ENCODE measurements at regions of chr4 and their contacts with region 1.

Region 1: DNA sequence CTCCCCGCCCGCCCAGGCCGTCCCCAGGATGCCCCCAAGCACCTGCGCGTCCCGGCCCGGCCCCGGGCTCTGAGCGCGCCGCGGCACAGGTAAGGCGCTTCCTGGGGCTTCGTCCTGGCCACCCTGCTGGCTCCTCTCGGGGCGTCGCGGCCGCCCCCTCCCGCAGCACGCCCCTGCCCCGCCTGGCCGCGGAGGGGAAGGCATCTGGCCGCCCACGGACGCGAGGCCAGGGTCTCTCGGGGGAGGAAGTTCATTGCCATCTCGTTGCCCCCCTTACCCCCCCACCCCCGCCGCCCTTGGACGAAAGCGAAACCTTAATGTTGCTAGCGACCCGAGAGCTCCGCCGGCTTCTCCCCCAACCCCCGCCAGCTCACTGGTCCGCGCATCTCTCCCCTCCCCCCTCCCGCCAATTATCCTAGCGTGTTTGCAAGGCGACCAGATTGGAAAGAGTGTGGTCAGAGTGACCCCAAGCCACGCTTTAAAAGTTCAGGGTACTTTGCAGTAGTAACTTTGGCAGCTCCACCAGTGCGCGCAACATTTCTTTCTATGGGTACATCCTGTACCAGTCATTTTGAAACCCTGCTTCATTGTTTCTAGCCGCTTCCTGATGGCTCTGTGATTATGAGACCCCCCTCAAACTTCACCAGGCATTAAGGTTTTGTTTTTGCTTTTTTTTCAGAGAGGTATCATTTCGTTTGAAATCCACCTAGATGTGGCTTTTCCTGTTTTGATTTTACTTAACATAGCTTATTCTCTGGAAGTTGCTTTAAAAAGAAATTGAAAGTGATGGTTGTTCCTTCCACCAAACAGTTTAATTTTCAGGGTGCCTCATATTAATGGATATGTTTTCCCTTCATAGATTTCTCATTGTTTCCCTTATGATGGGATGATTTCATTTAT is 626 bp downstream of the TBC1D1 start:
- DNase-seq: peak; percentile 74
- H3K4me3 Mint-ChIP-seq: peak overlapping the region; percentile 89
- H3K27ac Mint-ChIP-seq: peak overlapping the region; percentile 86
- H3K4me1 Mint-ChIP-seq: peaks cover 37% of the 10 kb centered on the region
- H3K27me3 Mint-ChIP-seq: peaks cover 8% of the 10 kb centered on the region

Region 2: GRCh38 chr4:36325499-36325898 is 1566.0 kb before region 1 on chr4:
- CTCF ChIA-PET with region 1: no interaction called
- intact Hi-C with region 1: loop called (anchors 10 kb)
- DNase-seq: peak; percentile 25
- H3K4me3 Mint-ChIP-seq: no peak overlapping the region
- H3K27ac Mint-ChIP-seq: peak overlapping the region; percentile 52
- H3K4me1 Mint-ChIP-seq: peaks cover 62% of the 10 kb centered on the region
- H3K27me3 Mint-ChIP-seq: no peaks in the 10 kb centered on the region

Region 3: DNA sequence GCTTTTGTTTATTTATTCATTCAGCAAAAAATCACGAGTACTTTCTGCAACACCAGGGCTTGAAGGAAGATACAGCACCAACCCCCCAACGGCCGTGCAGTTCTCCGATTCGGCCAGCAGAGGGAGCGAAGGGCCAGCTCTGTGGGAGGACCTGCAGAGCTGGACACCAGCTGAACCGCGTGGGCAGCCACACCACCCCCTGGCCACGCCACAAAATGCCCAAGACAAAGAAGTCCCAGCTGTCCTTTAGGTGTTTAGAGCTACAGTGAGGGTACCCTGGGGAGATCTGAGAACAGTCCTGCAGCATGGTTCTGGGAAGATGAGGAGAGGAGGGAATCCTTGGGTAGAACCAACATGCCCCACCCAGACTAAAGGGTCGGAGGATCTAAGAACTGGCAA is 288.4 kb before region 1 on chr4:
- CTCF ChIA-PET with region 1: interaction called, 5 read pairs
- intact Hi-C with region 1: loop called (anchors 2 kb)
- DNase-seq: peak; percentile 87
- H3K4me3 Mint-ChIP-seq: no peak overlapping the region
- H3K27ac Mint-ChIP-seq: no peak overlapping the region
- H3K4me1 Mint-ChIP-seq: peaks cover 3% of the 10 kb centered on the region
- H3K27me3 Mint-ChIP-seq: no peaks in the 10 kb centered on the region

Region 4: DNA sequence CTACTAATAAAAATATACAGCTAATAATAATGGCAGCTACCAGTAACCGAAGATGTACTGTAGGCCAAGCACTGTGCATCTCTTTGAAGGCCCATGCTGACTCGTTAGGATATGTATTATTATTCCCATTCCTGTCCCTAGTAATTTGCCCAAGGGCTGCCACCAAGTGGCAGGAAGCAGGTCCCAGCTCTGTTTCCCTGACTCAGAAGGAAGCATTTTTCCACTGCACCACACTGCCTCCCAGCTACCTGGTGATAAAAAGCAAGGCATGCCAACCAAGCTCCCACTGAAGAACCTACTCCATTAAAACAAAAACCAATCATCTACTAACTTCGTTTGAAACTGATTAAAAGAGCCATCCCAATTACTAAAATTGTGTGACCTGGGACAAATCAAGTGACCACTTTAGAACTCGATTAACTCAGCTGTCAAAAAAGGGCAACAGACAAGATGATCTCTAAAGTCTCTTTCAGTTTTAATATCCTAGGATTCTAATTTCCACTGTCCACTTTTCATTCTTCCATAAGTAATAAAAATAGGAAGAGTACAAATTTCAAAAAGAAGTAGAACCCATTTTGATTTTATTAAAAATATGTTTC is 89.3 kb before region 1 on chr4:
- CTCF ChIA-PET with region 1: interaction called, 4 read pairs
- intact Hi-C with region 1: loop called (anchors 1 kb)
- DNase-seq: peak; percentile 46
- H3K4me3 Mint-ChIP-seq: no peak overlapping the region
- H3K27ac Mint-ChIP-seq: no peak overlapping the region
- H3K4me1 Mint-ChIP-seq: no peaks in the 10 kb centered on the region
- H3K27me3 Mint-ChIP-seq: no peaks in the 10 kb centered on the region

Region 5: DNA sequence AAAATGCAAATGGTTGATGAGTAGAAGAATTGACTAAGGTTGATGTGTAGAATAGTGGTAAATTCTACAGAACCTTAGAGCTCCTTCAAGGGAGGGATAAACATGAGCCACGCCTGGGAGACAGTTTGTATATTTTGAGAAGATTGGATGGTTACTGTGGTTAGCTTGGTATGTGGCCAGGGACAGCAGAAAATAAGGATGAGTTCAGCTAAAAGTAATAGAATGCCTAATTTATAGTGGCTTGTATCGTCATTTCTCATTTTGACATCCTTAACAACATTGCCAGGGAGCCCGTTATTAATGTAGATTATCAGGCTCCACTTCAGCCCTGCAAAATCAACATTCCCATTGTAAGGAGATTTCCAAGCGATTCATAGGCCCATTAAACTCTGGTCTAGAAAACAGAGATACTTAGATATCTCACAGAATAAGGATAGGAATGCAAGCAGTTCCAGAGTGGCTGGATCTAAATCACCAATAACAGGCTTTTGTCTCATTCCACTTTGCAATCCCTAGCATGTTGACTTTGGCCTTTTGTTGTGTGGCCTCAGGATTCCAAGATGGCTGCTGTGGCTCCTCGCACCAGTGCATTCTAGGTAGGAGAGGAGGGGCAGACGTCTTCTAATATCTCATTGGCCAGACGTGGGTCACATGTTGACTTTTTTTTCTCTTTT is 62.2 kb after region 1 on chr4:
- CTCF ChIA-PET with region 1: interaction called, 3 read pairs
- intact Hi-C with region 1: loop called (anchors 2 kb)
- DNase-seq: no peak
- H3K4me3 Mint-ChIP-seq: no peak overlapping the region
- H3K27ac Mint-ChIP-seq: no peak overlapping the region
- H3K4me1 Mint-ChIP-seq: peaks cover 9% of the 10 kb centered on the region
- H3K27me3 Mint-ChIP-seq: no peaks in the 10 kb centered on the region

Region 6: GRCh38 chr4:38141808-38142500 is 250.4 kb after region 1 on chr4:
- CTCF ChIA-PET with region 1: no interaction called
- intact Hi-C with region 1: no loop called
- DNase-seq: no peak
- H3K4me3 Mint-ChIP-seq: no peak overlapping the region
- H3K27ac Mint-ChIP-seq: no peak overlapping the region
- H3K4me1 Mint-ChIP-seq: peaks cover 2% of the 10 kb centered on the region
- H3K27me3 Mint-ChIP-seq: no peaks in the 10 kb centered on the region

Region 7: DNA sequence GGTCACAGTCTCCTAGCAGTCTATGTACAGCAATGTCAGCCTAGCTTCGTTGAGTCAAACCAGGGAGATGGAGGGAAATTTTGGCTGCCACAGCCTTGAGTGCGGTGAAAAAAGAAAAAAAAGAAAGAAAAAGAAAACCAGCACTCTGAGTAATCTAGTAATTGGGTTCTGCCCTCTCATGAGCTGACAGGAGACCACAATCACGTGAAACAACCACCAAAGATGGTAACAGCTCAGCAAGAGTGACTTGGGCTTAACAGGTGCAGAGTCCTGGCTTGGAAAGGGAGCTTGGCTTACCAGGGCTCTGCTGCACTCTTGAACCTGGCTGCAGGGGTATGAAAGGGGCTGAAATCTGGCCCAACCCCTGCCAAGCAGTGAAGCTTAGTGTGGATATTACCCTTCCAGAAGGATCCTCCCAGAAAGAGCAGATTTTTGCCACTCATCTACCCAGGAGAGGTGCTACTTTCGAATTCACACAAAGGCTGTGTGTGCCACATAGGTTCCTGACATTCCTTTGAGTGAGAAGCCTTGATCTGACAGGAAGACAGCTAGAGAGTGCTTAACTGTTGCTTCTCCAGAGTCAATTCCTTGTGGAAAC is 419.0 kb after region 1 on chr4:
- CTCF ChIA-PET with region 1: no interaction called
- intact Hi-C with region 1: loop called (anchors 1 kb)
- DNase-seq: peak; percentile 89
- H3K4me3 Mint-ChIP-seq: peak overlapping the region; percentile 10
- H3K27ac Mint-ChIP-seq: peak overlapping the region; percentile 72
- H3K4me1 Mint-ChIP-seq: peaks cover 65% of the 10 kb centered on the region
- H3K27me3 Mint-ChIP-seq: peaks cover 2% of the 10 kb centered on the region